ENCODE measurements at regions of chr9 and their contacts with region 1.

Region 1: GRCh38 chr9:113221003-113221799 is at the starts of genes FKBP15 and SLC31A1:
- DNase-seq: peak; percentile 97
- H3K4me3 Mint-ChIP-seq: peak within 1 kb of the TSS; percentile 92
- H3K27ac Mint-ChIP-seq: peak within 1 kb of the TSS; percentile 85
- H3K4me1 Mint-ChIP-seq: peaks cover 46% of the 10 kb centered on the region
- H3K27me3 Mint-ChIP-seq: no peaks in the 10 kb centered on the region
- total RNA-seq, gene FKBP15: 34.9 to 38.2 TPM
- total RNA-seq, gene SLC31A1: 9.2 to 10.0 TPM

Region 2: DNA sequence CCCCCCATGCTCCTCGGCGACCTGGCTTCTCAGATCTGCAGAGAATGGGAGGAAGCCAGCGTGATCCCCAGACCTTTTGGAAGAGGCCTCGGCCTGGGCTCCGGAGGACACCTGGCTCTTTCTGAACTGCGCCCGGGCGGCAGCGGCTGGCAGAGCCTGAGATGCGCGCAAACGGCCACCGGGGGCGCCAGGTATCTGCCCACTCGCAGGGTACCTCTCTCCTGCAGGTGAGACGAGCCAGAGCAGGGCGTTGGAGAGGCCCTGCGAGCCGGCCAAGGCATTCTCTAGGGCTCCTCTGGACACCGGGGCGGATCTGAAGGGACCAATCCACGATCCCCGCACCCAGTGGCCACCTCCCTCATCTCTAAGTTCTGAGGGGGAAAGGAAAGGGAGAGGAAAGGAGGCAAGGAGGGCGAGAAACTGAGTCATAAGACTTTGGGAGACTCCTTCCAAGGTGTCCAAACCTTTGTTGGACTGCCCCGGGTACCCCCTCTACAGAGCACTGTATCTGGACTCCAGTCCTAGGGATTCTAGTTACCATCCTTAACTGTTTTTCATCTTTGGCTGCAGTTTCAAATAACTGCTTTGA is 275.5 kb before region 1 on chr9:
- CTCF ChIA-PET with region 1: no interaction called
- POLR2A ChIA-PET with region 1: no interaction called
- DNase-seq: no peak
- H3K4me3 Mint-ChIP-seq: no peak overlapping the region
- H3K27ac Mint-ChIP-seq: no peak overlapping the region
- H3K4me1 Mint-ChIP-seq: no peaks in the 10 kb centered on the region
- H3K27me3 Mint-ChIP-seq: peaks cover 1% of the 10 kb centered on the region

Region 3: DNA sequence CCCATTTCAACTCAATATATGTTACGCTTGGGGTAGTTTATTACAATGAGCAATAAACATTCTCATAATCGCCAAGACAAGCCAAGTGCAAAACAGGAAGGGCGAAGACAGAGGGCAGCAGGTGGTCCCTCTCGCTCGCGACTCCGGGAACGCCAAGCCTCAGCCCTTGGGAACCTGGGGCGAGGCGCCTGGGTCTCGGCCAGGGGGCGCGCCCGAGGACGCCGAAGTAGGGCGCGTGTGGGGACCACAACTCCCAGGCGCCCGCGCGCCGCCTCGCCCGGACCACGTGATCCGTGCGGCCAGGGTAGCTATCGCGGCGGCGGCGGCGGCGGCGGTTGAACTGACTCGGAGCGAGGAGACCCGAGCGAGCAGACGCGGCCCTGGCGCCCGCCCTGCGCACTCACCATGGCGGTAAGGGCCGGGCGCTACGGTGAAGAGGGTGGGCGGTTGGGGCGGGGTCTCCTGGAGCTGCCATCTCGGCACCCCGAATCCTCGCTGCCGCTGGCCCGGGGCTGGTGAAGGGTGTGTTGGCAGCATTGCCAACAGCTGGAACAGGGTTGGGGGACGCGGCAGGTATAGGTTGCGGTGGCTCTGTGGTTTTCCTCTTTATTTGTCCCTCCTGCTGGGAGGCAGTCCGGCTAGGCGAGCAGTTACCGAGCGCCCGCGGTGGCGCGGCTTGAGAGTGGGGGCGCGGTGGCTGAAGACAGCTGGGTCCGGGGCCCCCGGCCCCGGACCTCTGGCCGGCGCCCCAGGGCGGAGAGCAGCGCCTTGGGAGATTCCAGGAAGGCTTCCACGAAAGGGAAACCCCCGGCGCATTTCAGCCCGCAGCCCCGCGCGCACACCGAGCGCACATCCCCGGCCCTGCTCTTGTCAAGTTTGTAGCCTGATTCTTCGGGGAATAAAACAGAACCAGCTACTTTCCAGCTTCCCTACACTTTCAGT is 70.3 kb before region 1 on chr9 and contains the start of gene SLC31A2:
- CTCF ChIA-PET with region 1: interaction called, 7 read pairs
- POLR2A ChIA-PET with region 1: interaction called, 19 read pairs
- DNase-seq: peak; percentile 89
- H3K4me3 Mint-ChIP-seq: peak within 1 kb of the TSS; percentile 75
- H3K27ac Mint-ChIP-seq: no peak within 1 kb of the TSS
- H3K4me1 Mint-ChIP-seq: peaks cover 32% of the 10 kb centered on the region
- H3K27me3 Mint-ChIP-seq: peaks cover 1% of the 10 kb centered on the region
- total RNA-seq, gene SLC31A2: 3.6 TPM

Region 4: GRCh38 chr9:113210815-113211214 is 10.4 kb before region 1 on chr9:
- CTCF ChIA-PET with region 1: interaction called, 4 read pairs
- POLR2A ChIA-PET with region 1: interaction called, 13 read pairs
- DNase-seq: no peak
- H3K4me3 Mint-ChIP-seq: no peak overlapping the region
- H3K27ac Mint-ChIP-seq: no peak overlapping the region
- H3K4me1 Mint-ChIP-seq: peaks cover 15% of the 10 kb centered on the region
- H3K27me3 Mint-ChIP-seq: no peaks in the 10 kb centered on the region

Region 5: DNA sequence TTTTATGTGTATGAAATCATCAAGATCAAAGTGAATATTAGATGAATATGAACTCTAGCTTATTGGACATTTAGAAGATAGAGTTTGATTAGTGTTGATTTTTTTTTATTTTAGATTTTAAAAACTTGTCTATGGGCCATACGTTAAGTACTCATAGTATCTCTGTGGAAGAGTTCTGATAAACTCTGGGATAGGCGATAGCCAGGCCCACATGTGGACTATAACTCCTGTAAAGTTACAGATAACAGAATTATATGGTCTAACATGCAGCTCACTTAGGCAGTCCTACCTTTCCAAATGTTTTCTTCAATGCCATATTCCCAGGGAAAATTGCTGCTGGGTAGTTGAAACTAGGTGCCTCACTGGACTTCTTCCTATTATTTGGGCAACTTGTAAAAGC is 10.5 kb after region 1 on chr9:
- CTCF ChIA-PET with region 1: interaction called, 5 read pairs
- POLR2A ChIA-PET with region 1: interaction called, 41 read pairs
- DNase-seq: no peak
- H3K4me3 Mint-ChIP-seq: no peak overlapping the region
- H3K27ac Mint-ChIP-seq: no peak overlapping the region
- H3K4me1 Mint-ChIP-seq: peaks cover 23% of the 10 kb centered on the region
- H3K27me3 Mint-ChIP-seq: no peaks in the 10 kb centered on the region

Region 6: DNA sequence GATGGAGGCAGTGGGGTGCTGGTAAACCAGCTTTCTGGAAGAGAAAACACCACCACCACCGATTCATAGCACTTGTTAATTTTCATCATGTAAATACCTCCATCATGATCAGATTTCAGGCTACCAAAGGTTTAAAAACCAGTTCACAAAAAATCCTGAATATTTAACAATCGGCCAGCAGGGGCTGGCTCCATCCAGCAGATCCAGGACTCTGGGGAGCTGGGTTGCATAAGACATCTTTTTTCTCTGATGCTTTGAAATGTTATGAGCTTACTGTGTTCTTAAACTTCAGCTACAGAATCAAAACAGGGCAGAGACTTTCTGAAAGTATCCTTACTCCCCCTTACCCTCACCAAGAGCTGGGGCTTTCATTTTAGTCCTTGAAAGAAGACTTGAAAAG is 96.6 kb after region 1 on chr9:
- CTCF ChIA-PET with region 1: no interaction called
- POLR2A ChIA-PET with region 1: no interaction called
- DNase-seq: no peak
- H3K4me3 Mint-ChIP-seq: no peak overlapping the region
- H3K27ac Mint-ChIP-seq: no peak overlapping the region
- H3K4me1 Mint-ChIP-seq: no peaks in the 10 kb centered on the region
- H3K27me3 Mint-ChIP-seq: peaks cover 3% of the 10 kb centered on the region

Region 7: GRCh38 chr9:113331780-113332179 is 110.6 kb after region 1 on chr9:
- CTCF ChIA-PET with region 1: no interaction called
- POLR2A ChIA-PET with region 1: no interaction called
- DNase-seq: no peak
- H3K4me3 Mint-ChIP-seq: no peak overlapping the region
- H3K27ac Mint-ChIP-seq: no peak overlapping the region
- H3K4me1 Mint-ChIP-seq: peaks cover 11% of the 10 kb centered on the region
- H3K27me3 Mint-ChIP-seq: no peaks in the 10 kb centered on the region

Region 8: GRCh38 chr9:113454914-113455761 is 233.9 kb after region 1 on chr9:
- CTCF ChIA-PET with region 1: no interaction called
- POLR2A ChIA-PET with region 1: no interaction called
- DNase-seq: no peak
- H3K4me3 Mint-ChIP-seq: no peak overlapping the region
- H3K27ac Mint-ChIP-seq: no peak overlapping the region
- H3K4me1 Mint-ChIP-seq: peaks cover 6% of the 10 kb centered on the region
- H3K27me3 Mint-ChIP-seq: no peaks in the 10 kb centered on the region